Aorta (tissue), 5 donors: ENCODE measurements at regions of chr10 and their contacts with region 1.

Region 1: DNA sequence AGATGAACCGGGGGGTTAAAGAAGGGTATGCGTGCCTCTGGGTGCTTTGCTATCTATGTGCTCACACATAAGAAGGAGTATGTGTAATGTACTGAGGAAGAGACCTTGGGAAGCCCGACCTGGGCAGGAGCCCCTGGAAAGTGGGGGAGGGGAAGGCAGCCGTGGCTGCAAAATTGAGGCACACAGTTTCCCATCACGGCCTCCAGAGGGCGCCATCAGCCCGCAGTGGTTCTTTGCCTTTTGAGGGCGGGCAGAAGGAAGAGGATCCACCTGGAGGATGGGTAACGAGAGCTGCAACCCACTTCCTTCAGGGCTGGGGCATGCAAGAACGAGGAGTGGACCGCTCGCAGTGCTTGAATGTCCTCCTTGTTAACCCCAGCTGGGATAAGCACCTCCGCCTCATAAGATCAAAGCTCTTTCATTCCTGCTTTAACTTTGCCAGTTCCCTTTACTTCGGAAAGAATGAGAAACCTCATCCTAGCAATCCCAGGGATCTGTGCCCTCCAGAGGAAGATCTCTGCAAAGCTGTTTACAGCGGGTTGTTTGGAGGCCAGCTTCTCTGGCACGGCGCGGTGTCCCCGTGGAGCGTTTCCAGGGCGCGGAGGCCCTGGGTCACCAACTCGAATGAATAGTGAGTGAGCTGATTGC is 77.9 kb downstream of the PCGF5 start:
- DNase-seq: peak; percentile 82 to 93
- ATAC-seq: peak; percentile 92
- H3K4me3 ChIP-seq: peak overlapping the region; percentile 44 to 50
- H3K27ac ChIP-seq: no peak overlapping the region
- H3K4me1 ChIP-seq: no peaks in the 10 kb centered on the region
- H3K27me3 ChIP-seq: no peaks in the 10 kb centered on the region

Region 2: GRCh38 chr10:91251430-91252056 is 46.8 kb before region 1 on chr10:
- intact Hi-C with region 1: no loop called
- DNase-seq: no peak
- ATAC-seq: peak; percentile 87
- H3K4me3 ChIP-seq: no peak overlapping the region
- H3K27ac ChIP-seq: no peak overlapping the region
- H3K4me1 ChIP-seq: no peaks in the 10 kb centered on the region
- H3K27me3 ChIP-seq: no peaks in the 10 kb centered on the region

Region 3: GRCh38 chr10:91367127-91367531 is 68.8 kb after region 1 on chr10:
- intact Hi-C with region 1: loop called (anchors 1 to 2 kb)
- DNase-seq: no peak
- ATAC-seq: no peak
- H3K4me3 ChIP-seq: no peak overlapping the region
- H3K27ac ChIP-seq: no peak overlapping the region
- H3K4me1 ChIP-seq: no peaks in the 10 kb centered on the region
- H3K27me3 ChIP-seq: no peaks in the 10 kb centered on the region

Region 4: GRCh38 chr10:91389636-91390512 is 91.5 kb after region 1 on chr10:
- intact Hi-C with region 1: loop called in 1 of 2 experiments (anchors 5 kb)
- DNase-seq: no peak
- ATAC-seq: peak; percentile 84
- H3K4me3 ChIP-seq: no peak overlapping the region
- H3K27ac ChIP-seq: no peak overlapping the region
- H3K4me1 ChIP-seq: no peaks in the 10 kb centered on the region
- H3K27me3 ChIP-seq: peaks cover 0 to 1% of the 10 kb centered on the region in 2 donors